Transverse colon (tissue), 4 donors: ENCODE measurements at regions of chr12 and their contacts with region 1.

Region 1: GRCh38 chr12:116015525-116015924 is 262.0 kb downstream of the MED13L start:
- DNase-seq: no peak
- H3K4me3 ChIP-seq: no peak overlapping the region
- H3K27ac ChIP-seq: no peak overlapping the region
- H3K4me1 ChIP-seq: peaks cover 0 to 2% (median 0%) of the 10 kb centered on the region in 4 donors
- H3K27me3 ChIP-seq: no peaks in the 10 kb centered on the region
- CTCF ChIP-seq: peak; percentile 33 to 55 (median 39)
- EP300 ChIP-seq: no peak
- POLR2A ChIP-seq: no peak

Region 2: DNA sequence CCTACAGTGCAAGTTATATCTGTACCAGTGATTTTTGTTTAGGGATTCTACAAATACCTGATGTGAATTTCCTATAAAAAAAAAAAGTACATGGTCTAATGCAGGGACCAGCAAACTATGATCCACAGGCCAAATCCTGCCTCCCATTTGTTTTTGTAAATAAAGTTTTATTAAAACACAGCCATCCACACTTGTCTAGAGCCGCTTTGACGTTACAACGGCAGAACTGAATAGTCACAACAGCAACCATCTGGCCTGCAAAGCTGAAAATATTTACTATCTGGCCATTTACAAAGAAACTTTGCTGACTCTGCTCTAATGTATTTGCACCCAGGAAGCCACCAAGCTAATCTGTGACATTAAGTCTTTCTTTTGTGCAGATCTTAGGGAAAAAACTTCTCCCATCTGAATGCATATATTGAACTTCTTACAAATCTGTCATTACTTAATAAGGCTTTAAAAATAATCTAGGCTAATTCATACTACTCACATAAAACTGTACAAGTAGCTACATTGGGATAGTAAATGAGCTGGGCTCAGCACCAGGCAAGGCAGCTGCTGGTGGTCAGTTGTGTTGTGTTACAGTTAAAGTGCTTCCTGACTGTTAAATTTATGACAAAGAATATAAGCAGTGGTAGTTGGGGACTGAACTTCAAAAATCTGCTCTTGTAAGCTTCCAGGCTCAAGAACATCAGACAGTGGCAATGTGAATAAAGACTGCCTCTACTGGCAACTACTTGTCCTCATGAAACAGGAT is 41.4 kb before region 1 on chr12:
- in situ Hi-C with region 1: no loop called
- intact Hi-C with region 1: no loop called
- DNase-seq: no peak
- H3K4me3 ChIP-seq: no peak overlapping the region
- H3K27ac ChIP-seq: no peak overlapping the region
- H3K4me1 ChIP-seq: no peaks in the 10 kb centered on the region
- H3K27me3 ChIP-seq: no peaks in the 10 kb centered on the region
- CTCF ChIP-seq: no peak
- EP300 ChIP-seq: no peak
- POLR2A ChIP-seq: no peak

Region 3: DNA sequence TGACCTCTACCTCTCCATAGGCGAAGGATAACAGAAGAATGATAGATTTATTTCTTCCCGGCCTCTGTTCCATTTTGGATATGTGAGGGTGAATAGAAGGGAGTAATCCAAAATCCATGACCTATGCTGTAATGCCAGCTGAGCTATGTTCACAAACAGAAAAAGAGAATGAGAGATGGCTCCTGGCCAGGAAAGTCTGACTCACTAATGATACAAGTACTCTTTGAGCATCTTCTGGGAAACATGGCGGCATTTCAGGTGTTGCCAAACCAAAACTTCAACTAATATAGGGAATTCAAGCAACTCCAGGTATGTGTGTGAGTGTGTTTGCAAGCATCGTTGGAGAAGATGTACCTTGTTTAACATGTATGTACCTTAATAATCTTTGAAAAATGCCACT is 206.8 kb after region 1 on chr12:
- in situ Hi-C with region 1: loop called in 3 of 4 experiments (anchors 25 kb)
- intact Hi-C with region 1: loop called (anchors 10 kb)
- DNase-seq: peak; percentile 42
- H3K4me3 ChIP-seq: no peak overlapping the region
- H3K27ac ChIP-seq: no peak overlapping the region
- H3K4me1 ChIP-seq: peaks cover 0 to 17% (median 2%) of the 10 kb centered on the region in 4 donors
- H3K27me3 ChIP-seq: no peaks in the 10 kb centered on the region
- CTCF ChIP-seq: no peak
- EP300 ChIP-seq: peak; percentile 26
- POLR2A ChIP-seq: no peak

Region 4: GRCh38 chr12:116236148-116236731 is 220.7 kb after region 1 on chr12:
- in situ Hi-C with region 1: loop called in 3 of 4 experiments (anchors 25 kb)
- intact Hi-C with region 1: no loop called
- DNase-seq: peak; percentile 37
- H3K4me3 ChIP-seq: no peak overlapping the region
- H3K27ac ChIP-seq: peak overlapping the region in 1 of 4 donors; percentile 4
- H3K4me1 ChIP-seq: peaks cover 5 to 28% (median 19%) of the 10 kb centered on the region in 4 donors
- H3K27me3 ChIP-seq: no peaks in the 10 kb centered on the region
- CTCF ChIP-seq: peak; percentile 59 to 69 (median 63)
- EP300 ChIP-seq: no peak
- POLR2A ChIP-seq: no peak